ENCODE measurements at regions of chr5 and their contacts with region 1.

Region 1: GRCh38 chr5:43631182-43631910 is 28.4 kb downstream of the NNT start:
- DNase-seq: peak in 4 of 5 donors; percentile 2 to 48 (median 28)
- H3K4me3 ChIP-seq: no peak overlapping the region
- H3K4me3 Mint-ChIP-seq: no peak overlapping the region
- H3K27ac ChIP-seq: no peak overlapping the region
- H3K27ac Mint-ChIP-seq: peak overlapping the region in 4 of 8 donors; percentile 17 to 71 (median 30)
- H3K4me1 ChIP-seq: no peaks in the 10 kb centered on the region
- H3K4me1 Mint-ChIP-seq: peaks cover 30 to 58% (median 52%) of the 10 kb centered on the region in 3 donors
- H3K27me3 ChIP-seq: no peaks in the 10 kb centered on the region
- H3K27me3 Mint-ChIP-seq: no peaks in the 10 kb centered on the region

Region 2: GRCh38 chr5:43619380-43619779 is 12.0 kb before region 1 on chr5:
- CTCF ChIA-PET with region 1: interaction called, 15 read pairs
- POLR2A ChIA-PET with region 1: no interaction called
- DNase-seq: no peak
- H3K4me3 ChIP-seq: no peak overlapping the region
- H3K4me3 Mint-ChIP-seq: no peak overlapping the region
- H3K27ac ChIP-seq: no peak overlapping the region
- H3K27ac Mint-ChIP-seq: peak overlapping the region in 2 of 8 donors; percentile 5 to 24
- H3K4me1 ChIP-seq: no peaks in the 10 kb centered on the region
- H3K4me1 Mint-ChIP-seq: peaks cover 19 to 35% (median 24%) of the 10 kb centered on the region in 3 donors
- H3K27me3 ChIP-seq: no peaks in the 10 kb centered on the region
- H3K27me3 Mint-ChIP-seq: no peaks in the 10 kb centered on the region

Region 3: GRCh38 chr5:43649256-43649655 is 17.9 kb after region 1 on chr5:
- CTCF ChIA-PET with region 1: no interaction called
- POLR2A ChIA-PET with region 1: no interaction called
- DNase-seq: no peak
- H3K4me3 ChIP-seq: no peak overlapping the region
- H3K4me3 Mint-ChIP-seq: no peak overlapping the region
- H3K27ac ChIP-seq: no peak overlapping the region
- H3K27ac Mint-ChIP-seq: peak overlapping the region in 4 of 8 donors; percentile 33 to 77 (median 45)
- H3K4me1 ChIP-seq: no peaks in the 10 kb centered on the region
- H3K4me1 Mint-ChIP-seq: no peaks in the 10 kb centered on the region
- H3K27me3 ChIP-seq: no peaks in the 10 kb centered on the region
- H3K27me3 Mint-ChIP-seq: peaks cover 0 to 1% of the 10 kb centered on the region in 2 donors